ENCODE measurements at regions of chr11 and their contacts with region 1.

Region 1: DNA sequence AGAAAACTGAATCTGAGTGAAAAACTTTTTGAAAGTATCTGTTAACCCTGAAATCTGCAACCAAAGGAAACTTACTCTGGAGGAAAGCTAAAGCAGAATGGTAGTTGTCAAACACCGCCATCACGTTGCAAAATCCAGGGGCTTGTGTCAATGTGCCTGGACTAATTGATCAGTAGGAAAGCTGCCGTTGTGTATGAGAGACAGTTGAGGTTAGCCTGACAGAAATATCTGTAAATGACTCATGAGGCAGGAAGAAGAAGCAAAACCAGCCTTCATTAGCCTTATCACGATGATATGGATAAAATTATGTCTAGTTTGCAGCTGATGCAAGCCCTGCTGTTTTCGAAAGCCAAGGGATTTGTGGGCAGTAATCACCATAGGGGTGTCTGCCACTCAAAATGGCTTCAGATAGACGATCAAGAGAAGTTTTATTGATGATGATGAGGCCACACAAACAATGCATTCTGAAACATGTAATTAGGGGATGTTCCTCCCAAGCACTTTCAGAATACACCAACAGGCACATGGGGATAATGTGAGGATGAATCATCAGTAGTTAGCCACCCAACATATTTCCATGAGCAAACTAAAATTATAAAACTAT is 8.9 kb downstream of the SCGB1A1 start:
- DNase-seq: no peak
- H3K4me3 ChIP-seq: no peak overlapping the region
- H3K27ac ChIP-seq: peak overlapping the region in 1 of 2 donors; percentile 35
- H3K4me1 ChIP-seq: no peaks in the 10 kb centered on the region
- H3K27me3 ChIP-seq: no peaks in the 10 kb centered on the region
- CTCF ChIP-seq: no peak

Region 2: DNA sequence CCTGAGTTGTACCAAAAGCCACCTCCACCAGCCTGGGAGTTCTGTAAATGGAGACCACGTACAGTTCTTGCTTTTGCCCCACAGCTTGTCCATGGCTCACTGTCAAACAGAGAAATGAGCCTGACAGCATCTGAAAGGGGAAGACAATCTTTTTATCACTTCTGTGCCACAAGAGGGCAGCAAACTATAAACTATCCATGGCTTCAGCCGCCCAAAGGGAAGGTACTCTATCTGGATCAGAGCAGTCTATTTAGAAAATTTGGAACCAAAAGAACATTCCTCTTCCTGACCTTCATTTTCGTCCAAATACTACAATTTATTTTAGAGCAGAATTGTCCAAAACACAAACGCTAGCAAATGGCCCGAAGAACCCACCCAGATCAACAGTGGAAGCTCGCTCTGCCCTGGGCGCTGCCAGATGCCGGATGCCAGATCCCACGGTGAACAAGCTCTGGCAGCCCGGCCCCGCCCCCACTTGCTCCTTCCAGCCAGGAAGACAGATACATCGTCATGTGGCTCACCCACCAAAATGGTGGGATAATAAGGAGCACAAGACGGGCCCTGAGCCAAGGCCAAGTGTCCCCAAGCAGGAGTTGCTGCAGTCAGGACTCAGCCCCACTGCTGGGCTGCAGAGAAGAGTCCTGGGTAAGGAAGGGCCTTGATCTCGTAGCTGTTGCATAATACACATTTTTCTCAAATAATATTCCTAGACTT is 32.8 kb before region 1 on chr11:
- intact Hi-C with region 1: loop called (anchors 1 kb)
- DNase-seq: peak; percentile 24 to 89
- H3K4me3 ChIP-seq: peak overlapping the region; percentile 44 to 58
- H3K27ac ChIP-seq: peak overlapping the region; percentile 56 to 58
- H3K4me1 ChIP-seq: peaks cover 20 to 27% of the 10 kb centered on the region in 2 donors
- H3K27me3 ChIP-seq: no peaks in the 10 kb centered on the region
- CTCF ChIP-seq: peak; percentile 67 to 77 (median 69)

Region 3: GRCh38 chr11:62400760-62401159 is 27.0 kb before region 1 on chr11:
- intact Hi-C with region 1: loop called (anchors 1 kb)
- DNase-seq: peak; percentile 49 to 92
- H3K4me3 ChIP-seq: peak overlapping the region in 1 of 2 donors; percentile 31
- H3K27ac ChIP-seq: peak overlapping the region; percentile 87
- H3K4me1 ChIP-seq: peaks cover 45 to 54% of the 10 kb centered on the region in 2 donors
- H3K27me3 ChIP-seq: no peaks in the 10 kb centered on the region
- CTCF ChIP-seq: no peak

Region 4: DNA sequence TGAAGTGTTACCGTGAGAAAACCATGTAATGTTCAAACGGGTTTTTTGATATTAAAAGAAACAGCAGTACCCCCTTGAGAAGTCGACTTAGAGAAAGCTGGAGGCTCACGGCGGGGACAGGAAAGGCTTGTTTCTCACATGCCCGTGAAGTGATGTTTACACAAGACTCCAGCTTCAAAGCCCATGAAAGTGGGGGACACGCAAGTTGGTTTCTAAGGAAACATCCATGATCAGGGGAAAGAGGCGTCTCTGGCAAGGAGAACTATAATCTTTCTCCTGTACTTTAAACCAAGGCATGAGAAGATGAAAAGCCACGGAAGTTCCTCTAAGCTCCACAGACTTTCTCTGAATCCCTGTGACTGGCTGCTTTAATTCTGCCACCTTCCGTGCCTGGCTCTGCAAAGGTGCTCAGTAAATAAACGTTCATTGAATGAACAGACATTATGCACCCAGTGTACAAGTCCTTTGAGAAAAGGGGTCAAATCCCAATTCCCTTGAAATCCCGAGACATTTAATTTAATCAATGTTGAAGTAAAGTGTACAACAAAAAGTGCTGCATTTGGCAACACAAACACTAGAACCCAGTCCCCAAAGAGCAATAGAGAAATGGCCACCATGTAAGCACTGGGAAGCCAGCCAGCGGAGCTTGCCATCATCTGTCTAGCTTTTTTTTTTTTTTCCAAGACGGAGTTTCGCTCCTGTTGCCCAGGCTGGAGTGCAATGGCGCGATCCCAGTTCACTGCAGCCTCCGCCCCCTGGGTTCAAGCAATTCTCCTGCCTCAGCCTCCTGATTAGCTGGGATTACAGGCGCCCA is 60.2 kb after region 1 on chr11:
- intact Hi-C with region 1: no loop called
- DNase-seq: no peak
- H3K4me3 ChIP-seq: no peak overlapping the region
- H3K27ac ChIP-seq: no peak overlapping the region
- H3K4me1 ChIP-seq: no peaks in the 10 kb centered on the region
- H3K27me3 ChIP-seq: no peaks in the 10 kb centered on the region
- CTCF ChIP-seq: no peak

Region 5: DNA sequence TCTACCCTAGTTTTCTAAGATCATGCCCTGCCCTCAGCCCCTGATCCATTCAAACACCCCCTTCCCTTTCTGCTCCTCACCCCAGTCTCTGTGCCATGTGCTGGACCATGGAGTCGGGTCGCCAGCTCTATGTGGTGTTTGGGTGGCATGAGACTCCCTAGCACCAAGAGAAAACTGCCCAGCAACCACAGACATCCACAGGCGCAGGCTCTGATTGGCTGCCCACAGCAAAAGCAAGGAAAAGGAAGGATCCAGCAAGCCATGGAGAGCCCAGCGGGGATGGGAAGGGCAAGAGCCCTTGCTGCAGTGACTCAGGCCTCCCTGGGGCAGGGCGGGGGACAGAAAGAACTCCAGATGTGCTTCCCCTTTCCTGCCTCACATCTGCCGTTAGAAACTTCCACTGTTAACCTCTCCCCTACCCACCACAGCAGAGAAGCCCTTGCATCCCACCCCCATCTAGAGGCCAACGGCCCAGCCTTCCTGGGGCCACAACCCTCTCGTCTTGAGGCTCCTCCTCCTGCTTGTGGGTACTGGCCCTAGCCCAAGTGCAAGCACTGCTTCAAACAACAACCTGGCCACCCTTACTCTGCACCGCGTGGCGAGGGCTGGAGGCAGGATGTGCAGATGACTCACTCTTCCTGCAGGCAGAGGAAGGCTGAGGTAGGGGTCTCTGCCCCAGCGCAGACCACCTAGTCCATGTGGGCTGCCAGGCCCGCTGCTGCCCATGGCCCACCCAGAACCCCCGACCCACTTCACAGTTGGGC is 128.6 kb after region 1 on chr11:
- intact Hi-C with region 1: loop called (anchors 1 kb)
- DNase-seq: peak; percentile 85 to 97
- H3K4me3 ChIP-seq: peak overlapping the region; percentile 36 to 42
- H3K27ac ChIP-seq: peak overlapping the region; percentile 94 to 96
- H3K4me1 ChIP-seq: peaks cover 43 to 69% of the 10 kb centered on the region in 2 donors
- H3K27me3 ChIP-seq: no peaks in the 10 kb centered on the region
- CTCF ChIP-seq: no peak

Region 6: DNA sequence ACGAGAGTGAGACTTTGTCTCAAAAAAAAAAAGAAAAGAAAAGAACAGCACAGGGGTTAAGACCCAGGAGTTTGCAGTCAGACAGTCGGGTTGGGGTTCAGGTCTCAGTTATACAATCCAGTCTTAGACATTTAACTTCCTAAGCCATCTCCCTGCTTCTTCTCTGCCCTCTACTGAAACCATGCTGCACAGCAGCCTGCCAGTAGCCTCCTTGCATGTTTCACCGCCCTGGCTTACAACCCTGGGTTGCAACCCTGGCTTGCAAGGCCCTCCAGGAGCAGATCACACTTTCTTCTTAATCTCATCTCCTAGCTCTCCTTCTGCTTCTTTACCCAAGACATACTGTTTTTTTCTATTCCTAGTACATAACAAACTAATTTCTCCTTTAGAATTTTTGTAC is 200.0 kb after region 1 on chr11:
- intact Hi-C with region 1: no loop called
- DNase-seq: no peak
- H3K4me3 ChIP-seq: no peak overlapping the region
- H3K27ac ChIP-seq: no peak overlapping the region
- H3K4me1 ChIP-seq: no peaks in the 10 kb centered on the region
- H3K27me3 ChIP-seq: no peaks in the 10 kb centered on the region
- CTCF ChIP-seq: no peak

Measured in ascending aorta (tissue), 2 donors.